ENCODE measurements at regions of chr1 and their contacts with region 1.

Region 1: DNA sequence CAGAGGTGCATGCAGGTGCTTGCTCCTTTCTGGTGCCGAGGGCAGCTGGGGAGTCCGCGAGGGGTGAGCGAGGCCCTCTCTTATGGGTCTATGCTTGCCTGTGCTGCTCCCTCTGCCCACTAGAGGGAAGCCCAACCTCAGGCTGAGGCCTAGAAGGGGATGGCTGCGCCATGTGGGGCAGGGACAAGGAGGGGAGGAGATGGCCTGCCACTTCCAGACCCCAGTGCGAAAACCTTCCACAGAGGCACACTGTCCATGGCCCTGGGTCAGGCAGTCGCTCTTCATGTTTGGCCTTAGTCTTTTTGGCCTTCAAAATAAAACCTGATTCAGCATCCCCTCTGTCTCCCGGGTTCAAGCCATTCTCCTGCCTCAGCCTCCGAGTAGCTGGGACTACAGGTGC is 14.0 kb downstream of the RHBG start:
- DNase-seq: peak; percentile 91
- H3K4me3 ChIP-seq: no peak overlapping the region
- H3K27ac ChIP-seq: no peak overlapping the region
- H3K4me1 ChIP-seq: peaks cover 5 to 6% of the 10 kb centered on the region in 2 experiments; a peak in 2 of 4 replicates
- H3K27me3 ChIP-seq: no peaks in the 10 kb centered on the region
- CTCF ChIP-seq: peak; percentile 81
- EP300 ChIP-seq: no peak
- RAD21 ChIP-seq: peak; percentile 86

Region 2: GRCh38 chr1:155911156-155912055 is 471.6 kb before region 1 on chr1 and contains the start of gene RIT1:
- CTCF ChIA-PET with region 1: no interaction called
- POLR2A ChIA-PET with region 1: no interaction called
- DNase-seq: peak; percentile 92
- H3K4me3 ChIP-seq: peak within 1 kb of the TSS; percentile 56 to 94
- H3K27ac ChIP-seq: peak within 1 kb of the TSS; percentile 70 to 76
- H3K4me1 ChIP-seq: peaks cover 0 to 8% of the 10 kb centered on the region in 2 experiments; a peak in 3 of 4 replicates
- H3K27me3 ChIP-seq: no peaks in the 10 kb centered on the region
- CTCF ChIP-seq: no peak
- EP300 ChIP-seq: no peak
- RAD21 ChIP-seq: no peak
- polyA plus RNA-seq, gene RIT1: 28.8 and 35.3 TPM in 2 replicates

Region 3: DNA sequence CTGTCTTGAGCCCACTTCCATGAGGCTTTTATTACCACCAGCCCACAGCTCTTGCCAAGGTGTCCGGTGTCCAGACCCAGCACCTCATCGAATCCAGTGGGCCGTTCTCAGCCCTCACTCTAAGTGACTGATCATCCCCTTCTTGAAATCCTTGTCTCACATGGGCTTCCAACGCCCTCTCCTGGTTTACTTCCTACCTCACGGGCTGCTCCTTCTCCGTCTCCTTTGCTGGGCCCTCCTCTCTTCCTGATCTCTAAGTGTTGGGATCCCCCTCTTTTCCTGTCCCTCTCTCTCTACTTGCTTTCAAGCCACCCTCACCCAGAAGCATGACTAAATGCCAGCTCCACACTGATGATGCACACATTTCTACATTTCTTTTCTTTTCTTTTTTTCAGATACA is 23.1 kb before region 1 on chr1:
- CTCF ChIA-PET with region 1: interaction called, 117 read pairs
- POLR2A ChIA-PET with region 1: no interaction called
- DNase-seq: peak; percentile 69
- H3K4me3 ChIP-seq: no peak overlapping the region
- H3K27ac ChIP-seq: no peak overlapping the region
- H3K4me1 ChIP-seq: no peaks in the 10 kb centered on the region; a peak in 1 of 4 replicates
- H3K27me3 ChIP-seq: peaks cover 5% of the 10 kb centered on the region; the same call in 1 of the 2 replicates
- CTCF ChIP-seq: peak; percentile 61
- EP300 ChIP-seq: no peak
- RAD21 ChIP-seq: peak; percentile 84

Region 4: GRCh38 chr1:156407344-156407743 is 24.3 kb after region 1 on chr1:
- CTCF ChIA-PET with region 1: interaction called, 412 read pairs
- POLR2A ChIA-PET with region 1: no interaction called
- DNase-seq: peak; percentile 59
- H3K4me3 ChIP-seq: no peak overlapping the region
- H3K27ac ChIP-seq: no peak overlapping the region
- H3K4me1 ChIP-seq: no peaks in the 10 kb centered on the region
- H3K27me3 ChIP-seq: peaks cover 14% of the 10 kb centered on the region; the same call in 1 of the 2 replicates
- CTCF ChIP-seq: no peak
- EP300 ChIP-seq: no peak
- RAD21 ChIP-seq: no peak

Region 5: DNA sequence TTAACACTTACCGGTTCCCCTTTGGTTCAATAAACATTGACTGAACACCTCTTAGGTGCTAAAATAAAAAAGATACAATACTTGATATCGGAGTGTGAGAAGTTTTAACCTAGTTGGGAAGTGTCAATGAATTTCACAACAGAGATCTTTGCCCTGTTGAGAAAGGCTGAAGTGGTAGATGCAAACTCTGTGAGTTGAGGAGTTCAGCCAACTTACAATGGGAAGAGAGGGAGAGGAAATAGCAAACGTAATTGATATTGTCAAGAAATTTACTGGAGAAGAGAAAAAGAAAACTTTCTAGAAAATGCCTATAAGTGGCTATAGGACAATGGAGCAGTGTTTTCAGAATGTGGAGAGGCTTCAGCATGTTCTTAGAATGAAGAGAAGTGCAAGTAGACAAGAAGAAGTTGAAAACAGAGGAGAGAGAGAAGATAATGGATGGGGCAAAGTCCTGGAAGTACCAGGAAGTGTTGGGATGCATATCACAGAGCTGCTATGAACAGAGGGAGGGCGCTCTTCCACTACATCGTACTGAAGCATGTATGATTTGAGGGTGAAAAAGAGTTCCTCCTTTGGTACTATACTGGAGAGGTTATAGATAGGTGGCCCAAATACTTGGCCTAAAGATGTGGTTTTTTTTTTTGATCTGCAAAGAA is 68.6 kb after region 1 on chr1:
- CTCF ChIA-PET with region 1: interaction called, 391 read pairs
- POLR2A ChIA-PET with region 1: no interaction called
- DNase-seq: no peak
- H3K4me3 ChIP-seq: no peak overlapping the region
- H3K27ac ChIP-seq: no peak overlapping the region
- H3K4me1 ChIP-seq: peaks cover 0 to 5% of the 10 kb centered on the region in 2 experiments; a peak in 1 of 4 replicates
- H3K27me3 ChIP-seq: no peaks in the 10 kb centered on the region
- CTCF ChIP-seq: no peak
- EP300 ChIP-seq: no peak
- RAD21 ChIP-seq: no peak

Region 6: DNA sequence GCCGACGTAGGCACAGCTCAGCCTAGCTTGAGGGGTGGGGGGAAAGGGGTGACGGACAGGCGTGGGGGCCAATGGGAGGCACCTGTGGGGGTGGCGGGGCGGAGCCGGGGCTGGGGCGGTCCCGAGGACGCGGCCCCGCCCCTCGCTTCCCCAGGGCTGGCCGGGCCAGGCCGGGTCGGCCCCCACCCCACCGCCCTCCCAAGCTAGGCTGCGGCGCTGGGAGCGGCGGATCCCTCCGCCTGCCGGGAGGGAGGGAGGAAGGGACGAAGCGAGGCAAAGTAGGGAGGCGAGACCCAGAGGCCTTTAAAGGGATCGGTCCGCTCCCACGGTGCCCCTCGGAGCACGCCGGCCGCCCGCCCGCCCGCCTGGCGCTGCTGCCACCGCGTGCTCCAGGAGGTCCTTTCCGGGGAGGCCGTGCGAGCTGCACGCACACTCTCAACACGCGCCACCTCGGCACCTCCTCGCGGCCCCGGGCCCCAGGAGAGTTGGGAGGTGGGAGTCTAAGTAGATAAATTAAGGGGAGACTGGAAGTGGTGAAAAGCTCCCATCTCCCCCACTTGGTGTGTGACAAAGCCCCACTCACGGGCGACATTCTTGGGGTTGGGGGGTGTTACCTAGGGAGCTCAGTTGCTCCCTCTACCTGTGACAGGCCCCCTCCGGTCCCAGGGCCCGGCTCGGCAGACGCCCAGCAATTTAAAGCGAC is 117.9 kb after region 1 on chr1:
- CTCF ChIA-PET with region 1: interaction called, 14 read pairs
- POLR2A ChIA-PET with region 1: no interaction called
- DNase-seq: peak; percentile 99
- H3K4me3 ChIP-seq: peak overlapping the region; percentile 89 to 97
- H3K27ac ChIP-seq: peak overlapping the region; percentile 98 to 100
- H3K4me1 ChIP-seq: peaks cover 59 to 76% of the 10 kb centered on the region in 2 experiments
- H3K27me3 ChIP-seq: no peaks in the 10 kb centered on the region
- CTCF ChIP-seq: peak; percentile 59
- EP300 ChIP-seq: 0 out of 4 replicates have a peak, but pooled peaks of 1 of the 2 experiments have one; percentile 38
- RAD21 ChIP-seq: peak; percentile 35

Region 7: GRCh38 chr1:156591432-156592157 is 208.6 kb after region 1 on chr1 and contains the start of gene NAXE:
- CTCF ChIA-PET with region 1: interaction called, 11 read pairs
- POLR2A ChIA-PET with region 1: no interaction called
- DNase-seq: peak; percentile 95
- H3K4me3 ChIP-seq: peak within 1 kb of the TSS; percentile 83 to 86
- H3K27ac ChIP-seq: peak within 1 kb of the TSS; percentile 64 to 93
- H3K4me1 ChIP-seq: peaks cover 0 to 16% of the 10 kb centered on the region in 2 experiments; a peak in 2 of 4 replicates
- H3K27me3 ChIP-seq: no peaks in the 10 kb centered on the region
- CTCF ChIP-seq: no peak
- EP300 ChIP-seq: no peak
- RAD21 ChIP-seq: no peak
- polyA plus RNA-seq, gene NAXE: 68.5 and 98.4 TPM in 2 replicates